Naive thymus-derived CD4-positive, alpha-beta T cell (primary cell): ENCODE measurements at regions of chr12 and their contacts with region 1.

Region 1: GRCh38 chr12:11812586-11813427 is 163.3 kb downstream of the ETV6 start:
- DNase-seq: peak in 7 of 9 donors; percentile 5 to 42 (median 27)
- ATAC-seq: peak; percentile 79
- H3K4me3 ChIP-seq: no peak overlapping the region
- H3K4me3 Mint-ChIP-seq: peak overlapping the region; percentile 61 to 81 (median 74)
- H3K27ac ChIP-seq: peak overlapping the region; percentile 50
- H3K27ac Mint-ChIP-seq: peak overlapping the region; percentile 76 to 93 (median 88)
- H3K4me1 ChIP-seq: peaks cover 0 to 10% of the 10 kb centered on the region in 2 donors
- H3K4me1 Mint-ChIP-seq: peaks cover 35 to 66% (median 51%) of the 10 kb centered on the region in 7 donors
- H3K27me3 ChIP-seq: no peaks in the 10 kb centered on the region
- H3K27me3 Mint-ChIP-seq: no peaks in the 10 kb centered on the region

Region 2: DNA sequence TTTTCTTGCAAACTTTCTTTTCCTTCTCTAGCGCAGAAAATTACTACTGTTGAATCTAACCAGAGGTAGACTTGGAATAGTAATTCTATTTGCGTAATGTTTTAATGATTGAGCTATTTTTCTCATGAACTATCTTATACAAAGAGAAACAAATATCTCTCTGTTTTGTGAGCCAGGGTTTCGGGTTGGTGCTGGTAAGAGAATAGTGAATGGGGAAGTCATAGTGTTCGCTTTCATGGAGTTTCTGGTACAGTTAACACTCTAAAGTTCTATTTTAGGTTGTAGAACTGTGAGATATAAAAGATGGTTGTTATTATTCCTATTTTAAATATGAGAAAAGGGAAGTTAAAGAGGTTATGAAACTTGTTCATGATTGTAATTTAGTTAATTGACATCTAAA is 1820.5 kb before region 1 on chr12:
- CTCF ChIA-PET with region 1: no interaction called
- POLR2A ChIA-PET with region 1: no interaction called
- intact Hi-C with region 1: no loop called
- DNase-seq: no peak
- ATAC-seq: no peak
- H3K4me3 ChIP-seq: no peak overlapping the region
- H3K4me3 Mint-ChIP-seq: no peak overlapping the region
- H3K27ac ChIP-seq: no peak overlapping the region
- H3K27ac Mint-ChIP-seq: no peak overlapping the region
- H3K4me1 ChIP-seq: no peaks in the 10 kb centered on the region
- H3K4me1 Mint-ChIP-seq: peaks cover 0 to 5% (median 0%) of the 10 kb centered on the region in 7 donors
- H3K27me3 ChIP-seq: no peaks in the 10 kb centered on the region
- H3K27me3 Mint-ChIP-seq: peaks cover 0 to 67% (median 17%) of the 10 kb centered on the region in 5 donors

Region 3: DNA sequence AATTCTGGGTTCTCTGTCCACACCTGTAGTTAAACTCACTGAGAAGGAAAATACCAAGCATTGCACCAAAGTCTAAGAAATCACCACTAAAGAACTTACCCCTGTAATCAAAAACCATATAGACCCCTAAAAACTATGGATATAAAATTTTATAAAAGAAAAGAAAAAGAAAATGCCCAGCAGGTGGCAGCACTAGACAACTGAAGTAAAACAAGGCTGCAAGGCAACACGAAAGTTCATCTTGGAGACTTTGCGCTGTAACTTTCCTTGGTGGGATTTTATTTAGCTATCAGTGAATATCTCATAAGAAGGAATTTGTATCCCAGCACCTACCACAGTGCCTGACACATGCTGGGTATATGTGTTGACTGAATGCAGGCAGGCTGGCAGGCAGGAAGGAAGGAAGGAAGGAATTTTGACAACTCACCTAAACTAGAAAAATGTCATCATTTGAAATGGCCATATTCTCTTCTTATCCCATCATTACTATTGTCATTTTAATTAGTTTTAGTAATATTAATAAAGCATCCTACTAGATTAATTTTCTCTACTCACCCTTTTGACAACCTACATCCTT is 231.5 kb before region 1 on chr12:
- CTCF ChIA-PET with region 1: interaction called, 3 read pairs
- POLR2A ChIA-PET with region 1: no interaction called
- intact Hi-C with region 1: loop called in 1 of 2 experiments (anchors 1 kb)
- DNase-seq: peak; percentile 22 to 73 (median 64)
- ATAC-seq: peak; percentile 60
- H3K4me3 ChIP-seq: no peak overlapping the region
- H3K4me3 Mint-ChIP-seq: peak overlapping the region in 1 of 10 donors; percentile 65
- H3K27ac ChIP-seq: no peak overlapping the region
- H3K27ac Mint-ChIP-seq: peak overlapping the region in 2 of 9 donors; percentile 28 to 88
- H3K4me1 ChIP-seq: no peaks in the 10 kb centered on the region
- H3K4me1 Mint-ChIP-seq: peaks cover 0 to 10% (median 4%) of the 10 kb centered on the region in 7 donors
- H3K27me3 ChIP-seq: no peaks in the 10 kb centered on the region
- H3K27me3 Mint-ChIP-seq: peaks cover 0 to 14% (median 0%) of the 10 kb centered on the region in 5 donors

Region 4: GRCh38 chr12:11719678-11720099 is 93.1 kb before region 1 on chr12:
- CTCF ChIA-PET with region 1: no interaction called
- POLR2A ChIA-PET with region 1: no interaction called
- intact Hi-C with region 1: no loop called
- DNase-seq: peak in 1 of 9 donors; percentile 59
- ATAC-seq: peak; percentile 88
- H3K4me3 ChIP-seq: no peak overlapping the region
- H3K4me3 Mint-ChIP-seq: no peak overlapping the region
- H3K27ac ChIP-seq: no peak overlapping the region
- H3K27ac Mint-ChIP-seq: no peak overlapping the region
- H3K4me1 ChIP-seq: no peaks in the 10 kb centered on the region
- H3K4me1 Mint-ChIP-seq: peaks cover 12 to 57% (median 24%) of the 10 kb centered on the region in 7 donors
- H3K27me3 ChIP-seq: no peaks in the 10 kb centered on the region
- H3K27me3 Mint-ChIP-seq: no peaks in the 10 kb centered on the region

Region 5: DNA sequence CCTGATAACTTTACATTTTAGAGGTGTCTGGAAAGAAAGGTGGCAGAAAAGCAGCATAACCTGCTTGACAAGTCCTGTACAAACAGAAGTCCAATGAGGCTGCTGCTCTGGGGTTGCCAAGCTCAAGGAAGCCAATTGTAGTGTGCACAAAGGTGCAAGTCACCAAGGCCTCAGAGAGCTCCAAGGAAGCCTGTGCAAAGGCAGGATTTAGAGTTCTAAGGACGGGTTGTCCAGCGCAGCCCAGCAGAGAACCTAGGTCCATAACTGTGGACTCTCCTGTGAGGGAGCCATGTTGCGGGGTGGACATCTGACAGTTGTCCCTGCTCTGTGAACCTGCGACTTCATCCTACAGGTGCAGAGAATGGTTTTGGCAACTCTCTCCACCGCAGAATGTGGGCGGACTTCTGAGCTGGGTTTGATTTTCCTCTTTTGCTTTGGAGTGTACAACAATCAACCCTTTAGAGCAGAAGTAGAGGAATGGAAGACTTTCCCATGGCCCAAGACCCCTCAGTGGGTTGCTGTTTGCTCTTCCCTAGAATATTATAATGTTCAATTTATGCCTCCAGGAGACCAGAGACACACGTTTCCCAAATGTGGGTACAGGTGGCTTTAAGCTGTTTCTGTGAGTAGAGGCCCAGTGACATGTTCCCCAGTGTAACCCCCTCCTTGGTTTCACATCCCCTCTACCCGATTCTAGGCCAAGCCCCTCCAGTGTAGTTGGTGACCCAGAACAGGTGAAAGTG is 82.3 kb before region 1 on chr12:
- CTCF ChIA-PET with region 1: no interaction called
- POLR2A ChIA-PET with region 1: no interaction called
- intact Hi-C with region 1: loop called in 1 of 2 experiments (anchors 2 kb)
- DNase-seq: no peak
- ATAC-seq: peak; percentile 21
- H3K4me3 ChIP-seq: no peak overlapping the region
- H3K4me3 Mint-ChIP-seq: peak overlapping the region; percentile 39 to 90 (median 71)
- H3K27ac ChIP-seq: peak overlapping the region; percentile 34
- H3K27ac Mint-ChIP-seq: peak overlapping the region; percentile 81 to 98 (median 91)
- H3K4me1 ChIP-seq: peaks cover 25 to 60% of the 10 kb centered on the region in 2 donors
- H3K4me1 Mint-ChIP-seq: peaks cover 61 to 86% (median 76%) of the 10 kb centered on the region in 7 donors
- H3K27me3 ChIP-seq: no peaks in the 10 kb centered on the region
- H3K27me3 Mint-ChIP-seq: no peaks in the 10 kb centered on the region

Region 6: DNA sequence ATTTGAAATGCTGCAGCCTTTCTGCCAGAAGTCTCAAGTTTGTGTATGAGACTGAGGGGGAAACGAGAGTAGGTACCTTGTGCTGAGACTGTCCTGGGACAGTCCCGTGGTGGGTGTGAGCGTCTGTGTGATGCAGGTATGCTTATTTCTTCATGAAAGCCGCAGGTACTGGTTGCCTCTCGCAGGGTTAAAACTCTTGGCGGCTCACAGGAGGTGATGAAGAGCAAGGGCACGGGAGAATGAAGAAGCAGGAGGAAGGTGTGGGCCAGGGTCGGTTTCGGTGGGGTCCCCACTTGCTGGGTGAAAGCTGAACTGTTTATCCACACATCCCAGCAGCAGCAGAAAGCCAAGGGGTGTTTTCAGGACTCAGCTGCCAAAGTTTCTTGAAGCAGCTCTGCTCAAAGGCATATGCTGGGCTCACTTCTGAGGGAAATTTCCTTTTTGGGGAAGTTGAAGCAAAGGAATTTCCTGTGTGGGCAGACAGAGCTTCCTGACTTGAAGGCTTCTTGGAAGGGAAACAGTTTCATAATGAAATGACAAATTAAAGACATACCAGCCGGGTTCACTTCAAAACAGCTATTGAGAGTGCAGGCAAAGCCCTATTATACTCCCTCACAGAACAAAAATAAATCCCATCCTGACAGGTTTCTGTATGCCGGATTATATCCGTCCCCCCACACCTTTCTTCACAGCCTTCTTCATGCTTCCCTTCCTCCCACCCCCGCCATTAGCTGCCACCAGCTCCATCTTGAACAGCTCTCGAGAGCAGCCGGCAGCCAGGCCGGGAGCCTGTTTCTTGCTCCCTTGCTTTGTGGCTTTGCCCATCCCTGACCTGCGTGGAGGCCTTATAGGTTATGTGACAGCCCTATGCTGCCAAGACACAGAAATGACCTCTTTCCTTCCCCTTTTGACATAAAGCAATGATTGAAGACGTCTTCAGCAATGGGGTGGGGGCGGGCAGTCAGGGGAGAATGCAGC is 46.7 kb before region 1 on chr12:
- CTCF ChIA-PET with region 1: interaction called, 3 read pairs
- POLR2A ChIA-PET with region 1: no interaction called
- intact Hi-C with region 1: loop called (anchors 2 to 5 kb)
- DNase-seq: peak in 4 of 9 donors; percentile 13 to 69 (median 32)
- ATAC-seq: peak; percentile 77
- H3K4me3 ChIP-seq: peak overlapping the region; percentile 12
- H3K4me3 Mint-ChIP-seq: peak overlapping the region; percentile 51 to 93 (median 70)
- H3K27ac ChIP-seq: peak overlapping the region; percentile 36
- H3K27ac Mint-ChIP-seq: peak overlapping the region; percentile 30 to 87 (median 74)
- H3K4me1 ChIP-seq: peaks cover 24 to 33% of the 10 kb centered on the region in 2 donors
- H3K4me1 Mint-ChIP-seq: peaks cover 57 to 96% (median 81%) of the 10 kb centered on the region in 7 donors
- H3K27me3 ChIP-seq: no peaks in the 10 kb centered on the region
- H3K27me3 Mint-ChIP-seq: no peaks in the 10 kb centered on the region

Region 7: GRCh38 chr12:11771356-11771755 is 41.5 kb before region 1 on chr12:
- CTCF ChIA-PET with region 1: interaction called, 5 read pairs
- POLR2A ChIA-PET with region 1: no interaction called
- intact Hi-C with region 1: loop called (anchors 2 to 5 kb)
- DNase-seq: no peak
- ATAC-seq: no peak
- H3K4me3 ChIP-seq: no peak overlapping the region
- H3K4me3 Mint-ChIP-seq: peak overlapping the region in 1 of 10 donors; percentile 41
- H3K27ac ChIP-seq: no peak overlapping the region
- H3K27ac Mint-ChIP-seq: peak overlapping the region in 1 of 9 donors; percentile 78
- H3K4me1 ChIP-seq: peaks cover 11 to 12% of the 10 kb centered on the region in 2 donors
- H3K4me1 Mint-ChIP-seq: peaks cover 38 to 86% (median 71%) of the 10 kb centered on the region in 7 donors
- H3K27me3 ChIP-seq: no peaks in the 10 kb centered on the region
- H3K27me3 Mint-ChIP-seq: no peaks in the 10 kb centered on the region